Caco-2 (cell line): ENCODE measurements at regions of chr1 and their contacts with region 1.

Region 1: GRCh38 chr1:39852214-39852791 is 31.0 kb downstream of the TRIT1 start:
- DNase-seq: peak; percentile 42
- H3K4me3 ChIP-seq: no peak overlapping the region
- H3K4me3 Mint-ChIP-seq: no peak overlapping the region
- H3K27ac Mint-ChIP-seq: peak overlapping the region; percentile 23
- H3K4me1 ChIP-seq: peaks cover 13% of the 10 kb centered on the region; the same call in 1 of the 2 replicates
- H3K4me1 Mint-ChIP-seq: peaks cover 18% of the 10 kb centered on the region
- H3K27me3 ChIP-seq: no peaks in the 10 kb centered on the region
- H3K27me3 Mint-ChIP-seq: no peaks in the 10 kb centered on the region
- CTCF ChIP-seq: no peak

Region 2: DNA sequence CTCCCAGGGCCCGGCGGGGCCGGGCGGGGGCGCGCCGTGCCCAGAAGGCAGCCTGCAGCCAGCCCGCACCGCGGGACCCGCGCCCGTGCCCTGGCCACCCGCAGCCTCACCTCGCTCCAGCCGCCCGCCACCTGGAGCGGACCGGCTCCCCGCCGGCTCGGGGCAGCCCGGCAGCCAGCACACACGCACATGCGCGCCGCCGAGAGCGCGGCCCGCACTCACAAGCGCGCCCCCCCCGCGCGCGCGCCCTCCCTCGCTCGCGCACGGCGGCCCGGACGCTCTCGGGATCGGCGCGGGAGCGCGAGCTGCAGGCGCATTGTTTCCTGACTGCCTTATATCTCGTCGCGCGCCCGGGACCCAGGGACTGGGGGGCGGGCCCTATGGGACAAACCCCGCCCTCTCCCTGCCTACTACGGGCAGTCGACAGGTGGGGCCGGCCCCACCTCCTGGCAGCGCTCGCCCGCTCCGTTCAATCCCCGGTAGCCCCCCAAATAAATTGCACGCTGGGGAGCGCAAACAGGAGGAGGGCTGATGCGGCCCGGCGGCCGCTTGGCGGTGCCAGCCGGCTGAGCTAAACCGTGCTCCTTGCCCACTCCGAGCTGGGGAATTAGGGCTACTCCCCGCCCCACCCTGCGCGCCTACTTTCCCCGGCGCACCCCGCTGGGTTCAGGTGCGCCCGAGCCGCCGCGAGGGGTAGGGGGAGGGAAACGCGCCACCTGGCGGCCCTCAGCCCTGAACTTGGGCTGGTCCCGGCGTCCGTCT is 49.6 kb after region 1 on chr1 and contains the start of gene MYCL:
- CTCF ChIA-PET with region 1: interaction called, 5 read pairs
- POLR2A ChIA-PET with region 1: no interaction called
- intact Hi-C with region 1: loop called (anchors 1 kb)
- DNase-seq: peak; percentile 91 to 92
- H3K4me3 ChIP-seq: peak within 1 kb of the TSS; percentile 68
- H3K4me3 Mint-ChIP-seq: peak within 1 kb of the TSS; percentile 76
- H3K27ac Mint-ChIP-seq: no peak within 1 kb of the TSS
- H3K4me1 ChIP-seq: peaks cover 12% of the 10 kb centered on the region
- H3K4me1 Mint-ChIP-seq: no peaks in the 10 kb centered on the region
- H3K27me3 ChIP-seq: no peaks in the 10 kb centered on the region
- H3K27me3 Mint-ChIP-seq: no peaks in the 10 kb centered on the region
- CTCF ChIP-seq: peak; percentile 47 to 82
- total RNA-seq, gene MYCL: 7.2 and 7.8 TPM in 2 replicates

Region 3: GRCh38 chr1:40161125-40161887 is 309.0 kb after region 1 on chr1 and contains the start of gene RLF:
- CTCF ChIA-PET with region 1: no interaction called
- POLR2A ChIA-PET with region 1: no interaction called
- intact Hi-C with region 1: no loop called
- DNase-seq: peak; percentile 88 to 90
- H3K4me3 ChIP-seq: peak within 1 kb of the TSS; percentile 74
- H3K4me3 Mint-ChIP-seq: no peak within 1 kb of the TSS
- H3K27ac Mint-ChIP-seq: no peak within 1 kb of the TSS
- H3K4me1 ChIP-seq: peaks cover 5% of the 10 kb centered on the region; the same call in 1 of the 2 replicates
- H3K4me1 Mint-ChIP-seq: peaks cover 13% of the 10 kb centered on the region
- H3K27me3 ChIP-seq: no peaks in the 10 kb centered on the region
- H3K27me3 Mint-ChIP-seq: no peaks in the 10 kb centered on the region
- CTCF ChIP-seq: no peak
- total RNA-seq, gene RLF: 11.6 and 12.8 TPM in 2 replicates